Naive thymus-derived CD4-positive, alpha-beta T cell (primary cell): ENCODE measurements at regions of chr19 and their contacts with region 1.

Region 1: GRCh38 chr19:14529254-14530004 is at the start of gene TECR:
- DNase-seq: peak; percentile 98 to 100 (median 100)
- ATAC-seq: peak; percentile 96
- H3K4me3 ChIP-seq: peak within 1 kb of the TSS; percentile 96
- H3K4me3 Mint-ChIP-seq: peak within 1 kb of the TSS; percentile 88 to 97 (median 95)
- H3K27ac ChIP-seq: peak within 1 kb of the TSS; percentile 89
- H3K27ac Mint-ChIP-seq: peak within 1 kb of the TSS; percentile 95 to 100 (median 98)
- H3K4me1 ChIP-seq: peaks cover 22 to 30% of the 10 kb centered on the region in 2 donors
- H3K4me1 Mint-ChIP-seq: peaks cover 9 to 72% (median 54%) of the 10 kb centered on the region in 7 donors
- H3K27me3 ChIP-seq: no peaks in the 10 kb centered on the region
- H3K27me3 Mint-ChIP-seq: no peaks in the 10 kb centered on the region
- total RNA-seq, gene TECR: 123 to 218 (median 150) TPM

Region 2: DNA sequence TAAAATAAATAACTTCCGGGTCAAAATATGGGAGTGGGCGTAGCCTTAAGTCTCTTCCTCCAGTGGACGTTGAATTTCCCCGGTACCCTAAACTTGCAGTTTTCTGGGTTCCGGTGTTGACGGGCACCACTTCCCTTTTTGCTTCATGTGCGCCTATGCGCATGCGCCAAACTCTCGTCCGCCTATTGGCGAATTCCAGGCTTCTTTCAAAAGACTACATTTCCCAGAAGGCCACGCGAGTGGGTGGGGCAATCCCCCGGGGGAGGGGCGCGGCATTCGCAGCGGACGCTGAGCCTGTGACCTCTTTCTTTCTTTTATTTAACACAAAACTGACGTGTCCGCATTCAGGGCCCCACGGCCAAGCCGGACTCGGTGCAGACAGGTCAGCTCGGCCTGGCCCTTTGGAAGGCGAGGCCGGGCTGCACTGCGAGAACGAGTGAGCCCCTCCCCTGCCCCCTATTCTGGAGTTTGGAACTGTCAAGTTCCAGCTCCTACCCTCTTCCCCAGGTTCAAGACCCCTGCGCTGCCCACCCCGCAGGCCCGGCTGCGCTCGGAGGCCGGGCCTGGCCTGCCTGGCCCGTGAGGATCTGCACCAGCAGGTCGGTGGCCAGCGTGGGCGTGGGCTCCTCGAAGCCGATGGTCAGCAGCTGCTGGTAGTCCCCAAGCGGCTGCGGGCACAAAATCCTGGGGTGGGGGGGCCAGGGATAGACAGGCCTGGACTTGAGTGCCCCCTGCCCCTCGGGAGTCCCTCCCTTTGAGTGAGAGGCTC is 447.9 kb before region 1 on chr19:
- CTCF ChIA-PET with region 1: no interaction called
- POLR2A ChIA-PET with region 1: no interaction called
- intact Hi-C with region 1: loop called in 1 of 2 experiments (anchors 1 kb)
- DNase-seq: peak; percentile 96 to 100 (median 99)
- ATAC-seq: peak; percentile 97
- H3K4me3 ChIP-seq: peak overlapping the region; percentile 86
- H3K4me3 Mint-ChIP-seq: peak overlapping the region; percentile 80 to 98 (median 94)
- H3K27ac ChIP-seq: peak overlapping the region; percentile 80
- H3K27ac Mint-ChIP-seq: peak overlapping the region; percentile 86 to 98 (median 95)
- H3K4me1 ChIP-seq: peaks cover 5 to 15% of the 10 kb centered on the region in 2 donors
- H3K4me1 Mint-ChIP-seq: peaks cover 0 to 27% (median 17%) of the 10 kb centered on the region in 7 donors
- H3K27me3 ChIP-seq: no peaks in the 10 kb centered on the region
- H3K27me3 Mint-ChIP-seq: no peaks in the 10 kb centered on the region

Region 3: GRCh38 chr19:14496028-14496833 is 33.2 kb before region 1 on chr19 and contains the start of gene GIPC1:
- CTCF ChIA-PET with region 1: no interaction called
- POLR2A ChIA-PET with region 1: interaction called, 1,101 read pairs
- intact Hi-C with region 1: no loop called
- DNase-seq: peak; percentile 80 to 92 (median 86)
- ATAC-seq: peak; percentile 94
- H3K4me3 ChIP-seq: peak within 1 kb of the TSS; percentile 74
- H3K4me3 Mint-ChIP-seq: peak within 1 kb of the TSS; percentile 74 to 91 (median 88)
- H3K27ac ChIP-seq: peak within 1 kb of the TSS; percentile 80
- H3K27ac Mint-ChIP-seq: peak within 1 kb of the TSS; percentile 79 to 93 (median 87)
- H3K4me1 ChIP-seq: peaks cover 12 to 14% of the 10 kb centered on the region in 2 donors
- H3K4me1 Mint-ChIP-seq: peaks cover 5 to 35% (median 28%) of the 10 kb centered on the region in 7 donors
- H3K27me3 ChIP-seq: no peaks in the 10 kb centered on the region
- H3K27me3 Mint-ChIP-seq: no peaks in the 10 kb centered on the region
- total RNA-seq, gene GIPC1: 21.3 to 45.4 (median 24.7) TPM

Region 4: GRCh38 chr19:14556662-14557188 is 27.3 kb after region 1 on chr19:
- CTCF ChIA-PET with region 1: interaction called, 8 read pairs
- POLR2A ChIA-PET with region 1: interaction called, 4 read pairs
- intact Hi-C with region 1: loop called (anchors 1 kb)
- DNase-seq: peak; percentile 42 to 75 (median 60)
- ATAC-seq: peak; percentile 91
- H3K4me3 ChIP-seq: peak overlapping the region; percentile 10
- H3K4me3 Mint-ChIP-seq: peak overlapping the region; percentile 29 to 79 (median 68)
- H3K27ac ChIP-seq: no peak overlapping the region
- H3K27ac Mint-ChIP-seq: peak overlapping the region in 8 of 9 donors; percentile 79 to 90 (median 84)
- H3K4me1 ChIP-seq: peaks cover 15 to 53% of the 10 kb centered on the region in 2 donors
- H3K4me1 Mint-ChIP-seq: peaks cover 28 to 71% (median 40%) of the 10 kb centered on the region in 7 donors
- H3K27me3 ChIP-seq: no peaks in the 10 kb centered on the region
- H3K27me3 Mint-ChIP-seq: no peaks in the 10 kb centered on the region

Region 5: GRCh38 chr19:14614099-14614412 is 84.6 kb after region 1 on chr19:
- CTCF ChIA-PET with region 1: no interaction called
- POLR2A ChIA-PET with region 1: no interaction called
- intact Hi-C with region 1: no loop called
- DNase-seq: no peak
- ATAC-seq: peak; percentile 90
- H3K4me3 ChIP-seq: no peak overlapping the region
- H3K4me3 Mint-ChIP-seq: no peak overlapping the region
- H3K27ac ChIP-seq: no peak overlapping the region
- H3K27ac Mint-ChIP-seq: no peak overlapping the region
- H3K4me1 ChIP-seq: no peaks in the 10 kb centered on the region
- H3K4me1 Mint-ChIP-seq: peaks cover 0 to 11% (median 0%) of the 10 kb centered on the region in 7 donors
- H3K27me3 ChIP-seq: no peaks in the 10 kb centered on the region
- H3K27me3 Mint-ChIP-seq: peaks cover 0 to 9% (median 7%) of the 10 kb centered on the region in 5 donors